Ovary (tissue), 10 donors: ENCODE measurements at regions of chr6 and their contacts with region 1.

Region 1: DNA sequence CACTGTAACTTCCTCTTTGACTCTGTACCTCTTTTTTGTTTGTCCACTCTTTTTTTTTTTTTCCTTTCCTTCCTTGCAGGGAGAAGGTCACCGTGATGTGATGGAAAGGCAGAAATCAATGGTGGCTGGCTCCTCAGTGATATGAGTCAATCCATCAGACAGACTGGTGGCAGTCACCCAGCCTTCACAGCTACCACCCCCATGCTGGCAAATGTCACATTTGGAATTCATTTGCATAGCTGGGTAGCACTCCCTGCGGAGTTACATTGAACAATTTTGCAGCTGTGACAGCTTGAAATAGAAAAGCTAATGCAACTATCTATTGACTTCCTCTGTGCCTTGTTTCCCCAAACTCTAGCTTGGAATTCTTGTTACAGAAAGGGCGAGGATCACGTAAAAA is 668.5 kb downstream of the C6orf118 start:
- DNase-seq: no peak
- H3K4me3 ChIP-seq: no peak overlapping the region
- H3K27ac ChIP-seq: no peak overlapping the region
- H3K4me1 ChIP-seq: no peaks in the 10 kb centered on the region
- H3K27me3 ChIP-seq: no peaks in the 10 kb centered on the region
- CTCF ChIP-seq: no peak
- EP300 ChIP-seq: no peak
- POLR2A ChIP-seq: no peak

Region 2: DNA sequence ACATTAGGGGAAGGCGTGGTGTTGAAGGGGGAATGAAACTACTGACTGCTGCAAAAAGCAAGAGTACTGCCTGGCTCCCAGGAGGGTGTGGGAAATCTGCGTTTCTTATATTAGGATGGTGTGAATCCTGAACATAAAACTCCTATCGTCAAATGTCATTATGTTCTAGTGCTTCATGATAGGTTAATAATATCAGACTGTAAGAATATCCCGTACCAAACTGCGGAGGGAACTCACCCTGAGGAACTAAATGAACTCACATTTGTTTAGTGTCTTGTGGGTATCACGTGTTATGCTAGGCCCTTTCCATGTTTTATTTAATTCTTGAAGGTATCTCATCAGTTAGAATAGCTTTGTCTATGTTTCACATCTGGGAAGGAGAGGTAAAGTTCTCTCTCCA is 615.8 kb before region 1 on chr6:
- intact Hi-C with region 1: loop called in 1 of 4 experiments (anchors 5 kb)
- DNase-seq: no peak
- H3K4me3 ChIP-seq: no peak overlapping the region
- H3K27ac ChIP-seq: no peak overlapping the region
- H3K4me1 ChIP-seq: no peaks in the 10 kb centered on the region
- H3K27me3 ChIP-seq: no peaks in the 10 kb centered on the region
- CTCF ChIP-seq: no peak
- EP300 ChIP-seq: no peak
- POLR2A ChIP-seq: no peak

Region 3: GRCh38 chr6:164731539-164731938 is 90.6 kb after region 1 on chr6:
- intact Hi-C with region 1: no loop called
- DNase-seq: no peak
- H3K4me3 ChIP-seq: no peak overlapping the region
- H3K27ac ChIP-seq: no peak overlapping the region
- H3K4me1 ChIP-seq: no peaks in the 10 kb centered on the region
- H3K27me3 ChIP-seq: no peaks in the 10 kb centered on the region
- CTCF ChIP-seq: no peak
- EP300 ChIP-seq: no peak
- POLR2A ChIP-seq: no peak